CD14-positive monocyte (primary cell): ENCODE measurements at regions of chr2 and their contacts with region 1.

Region 1: GRCh38 chr2:101883863-101884262 is 107.9 kb upstream of the IL1R2 start:
- DNase-seq: peak; percentile 61 to 75 (median 71)
- H3K4me3 ChIP-seq: no peak overlapping the region
- H3K4me3 Mint-ChIP-seq: no peak overlapping the region
- H3K27ac ChIP-seq: no peak overlapping the region
- H3K27ac Mint-ChIP-seq: peak overlapping the region in 3 of 7 donors; percentile 38 to 69 (median 63)
- H3K4me1 ChIP-seq: no peaks in the 10 kb centered on the region
- H3K4me1 Mint-ChIP-seq: peaks cover 2% of the 10 kb centered on the region
- H3K27me3 ChIP-seq: no peaks in the 10 kb centered on the region
- H3K27me3 Mint-ChIP-seq: no peaks in the 10 kb centered on the region
- CTCF ChIP-seq: peak; percentile 75

Region 2: DNA sequence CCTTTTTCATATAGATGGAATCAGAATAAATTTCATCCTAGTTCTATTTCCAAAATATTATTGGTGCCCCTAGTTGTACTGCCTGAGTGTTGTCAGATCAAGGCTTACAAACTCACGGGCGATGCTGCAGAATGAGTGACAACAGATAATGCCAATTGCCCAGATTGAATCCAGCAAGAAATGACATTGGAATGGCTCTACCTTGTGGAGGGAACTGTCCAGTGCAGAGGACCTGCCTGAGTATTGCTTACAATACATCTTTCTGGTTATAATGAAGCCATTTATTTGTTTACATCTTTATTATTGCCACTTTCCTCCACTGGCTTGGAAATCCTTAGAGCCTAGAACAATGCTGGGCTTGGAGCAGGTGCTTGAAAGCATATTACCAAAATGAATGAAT is 100.1 kb after region 1 on chr2:
- intact Hi-C with region 1: loop called (anchors 5 to 10 kb)
- DNase-seq: peak in 1 of 3 donors; percentile 26
- H3K4me3 ChIP-seq: no peak overlapping the region
- H3K4me3 Mint-ChIP-seq: no peak overlapping the region
- H3K27ac ChIP-seq: no peak overlapping the region
- H3K27ac Mint-ChIP-seq: no peak overlapping the region
- H3K4me1 ChIP-seq: peaks cover 4 to 5% of the 10 kb centered on the region in 2 donors
- H3K4me1 Mint-ChIP-seq: peaks cover 6% of the 10 kb centered on the region
- H3K27me3 ChIP-seq: no peaks in the 10 kb centered on the region
- H3K27me3 Mint-ChIP-seq: peaks cover 0 to 2% (median 1%) of the 10 kb centered on the region in 3 donors
- CTCF ChIP-seq: peak; percentile 27

Region 3: DNA sequence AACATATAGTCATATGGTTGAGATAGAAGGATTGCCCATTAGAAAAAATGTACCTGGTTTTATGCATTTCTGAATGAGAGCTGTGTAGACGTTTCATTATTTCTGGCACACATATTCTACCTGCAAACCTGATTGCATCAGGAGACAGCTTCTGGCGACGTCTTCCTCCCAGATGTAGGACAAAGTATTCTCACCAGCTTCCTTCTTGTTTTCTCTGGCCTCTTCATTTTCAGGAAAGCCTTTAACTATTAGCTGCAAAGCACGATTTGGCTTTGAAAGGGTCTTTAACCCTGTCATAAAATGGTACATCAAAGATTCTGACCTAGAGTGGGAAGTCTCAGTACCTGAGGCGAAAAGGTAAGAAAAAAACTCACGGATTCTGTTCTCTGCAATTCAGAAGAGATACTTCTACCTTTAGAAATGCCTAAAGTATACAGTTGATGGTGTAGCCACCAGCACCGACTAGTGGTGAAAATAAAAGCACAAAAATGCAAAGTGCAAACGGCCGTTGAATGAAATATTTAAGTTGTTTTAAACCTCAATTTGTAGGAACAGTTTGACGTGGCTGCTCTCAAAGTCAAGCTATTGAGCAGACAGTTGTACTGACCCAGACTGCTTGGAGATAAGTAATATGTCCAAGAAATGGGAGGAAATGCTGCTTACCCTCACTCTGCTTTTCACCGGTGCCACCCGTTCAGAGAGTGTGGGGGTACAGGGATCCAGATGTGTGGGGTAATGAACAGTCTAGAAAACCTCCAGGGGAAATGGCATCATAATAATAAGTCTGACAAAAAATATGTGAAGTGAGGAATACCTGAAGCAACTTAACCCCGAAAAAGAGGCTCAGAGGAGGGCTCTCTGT is 559.3 kb after region 1 on chr2:
- intact Hi-C with region 1: loop called (anchors 5 kb)
- DNase-seq: peak; percentile 18 to 48 (median 29)
- H3K4me3 ChIP-seq: no peak overlapping the region
- H3K4me3 Mint-ChIP-seq: peak overlapping the region in 1 of 2 donors; percentile 51
- H3K27ac ChIP-seq: no peak overlapping the region
- H3K27ac Mint-ChIP-seq: no peak overlapping the region
- H3K4me1 ChIP-seq: peaks cover 4 to 6% of the 10 kb centered on the region in 2 donors
- H3K4me1 Mint-ChIP-seq: peaks cover 5% of the 10 kb centered on the region
- H3K27me3 ChIP-seq: peaks cover 0 to 3% of the 10 kb centered on the region in 2 donors
- H3K27me3 Mint-ChIP-seq: peaks cover 0 to 3% (median 1%) of the 10 kb centered on the region in 3 donors
- CTCF ChIP-seq: peak; percentile 82

Region 4: DNA sequence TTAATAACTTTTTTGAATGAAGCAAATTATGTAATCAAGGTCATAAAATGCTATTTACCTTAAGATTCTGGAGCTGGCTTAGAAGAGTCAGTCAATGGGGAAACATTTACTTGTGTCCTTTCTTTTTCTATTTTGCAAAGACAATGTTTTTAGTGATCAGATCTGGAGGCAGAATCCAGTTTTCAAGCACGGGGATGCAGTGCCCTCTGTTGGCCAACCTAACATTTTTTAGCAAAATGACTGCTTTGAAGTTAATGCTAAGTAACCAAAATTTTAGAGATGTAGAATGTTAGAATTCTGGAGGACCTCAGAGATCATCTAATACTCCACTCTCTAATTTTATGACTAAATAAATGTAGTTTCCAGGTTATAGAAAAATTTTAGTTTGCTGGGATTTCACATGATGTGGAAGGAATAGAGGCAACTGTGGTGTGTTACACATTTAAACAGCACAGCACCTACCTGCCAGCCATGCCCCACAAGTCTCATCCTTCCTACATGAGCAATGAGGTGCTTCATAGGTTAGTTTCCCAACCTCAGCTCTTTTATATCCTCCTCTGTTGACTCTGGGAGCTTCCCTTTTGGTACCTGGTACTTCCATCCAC is 565.6 kb after region 1 on chr2:
- intact Hi-C with region 1: loop called (anchors 5 kb)
- DNase-seq: peak; percentile 19 to 52 (median 40)
- H3K4me3 ChIP-seq: no peak overlapping the region
- H3K4me3 Mint-ChIP-seq: no peak overlapping the region
- H3K27ac ChIP-seq: no peak overlapping the region
- H3K27ac Mint-ChIP-seq: no peak overlapping the region
- H3K4me1 ChIP-seq: no peaks in the 10 kb centered on the region
- H3K4me1 Mint-ChIP-seq: no peaks in the 10 kb centered on the region
- H3K27me3 ChIP-seq: no peaks in the 10 kb centered on the region
- H3K27me3 Mint-ChIP-seq: peaks cover 2 to 5% (median 3%) of the 10 kb centered on the region in 3 donors
- CTCF ChIP-seq: peak; percentile 81